ENCODE measurements at regions of chr4 and their contacts with region 1.

Region 1: DNA sequence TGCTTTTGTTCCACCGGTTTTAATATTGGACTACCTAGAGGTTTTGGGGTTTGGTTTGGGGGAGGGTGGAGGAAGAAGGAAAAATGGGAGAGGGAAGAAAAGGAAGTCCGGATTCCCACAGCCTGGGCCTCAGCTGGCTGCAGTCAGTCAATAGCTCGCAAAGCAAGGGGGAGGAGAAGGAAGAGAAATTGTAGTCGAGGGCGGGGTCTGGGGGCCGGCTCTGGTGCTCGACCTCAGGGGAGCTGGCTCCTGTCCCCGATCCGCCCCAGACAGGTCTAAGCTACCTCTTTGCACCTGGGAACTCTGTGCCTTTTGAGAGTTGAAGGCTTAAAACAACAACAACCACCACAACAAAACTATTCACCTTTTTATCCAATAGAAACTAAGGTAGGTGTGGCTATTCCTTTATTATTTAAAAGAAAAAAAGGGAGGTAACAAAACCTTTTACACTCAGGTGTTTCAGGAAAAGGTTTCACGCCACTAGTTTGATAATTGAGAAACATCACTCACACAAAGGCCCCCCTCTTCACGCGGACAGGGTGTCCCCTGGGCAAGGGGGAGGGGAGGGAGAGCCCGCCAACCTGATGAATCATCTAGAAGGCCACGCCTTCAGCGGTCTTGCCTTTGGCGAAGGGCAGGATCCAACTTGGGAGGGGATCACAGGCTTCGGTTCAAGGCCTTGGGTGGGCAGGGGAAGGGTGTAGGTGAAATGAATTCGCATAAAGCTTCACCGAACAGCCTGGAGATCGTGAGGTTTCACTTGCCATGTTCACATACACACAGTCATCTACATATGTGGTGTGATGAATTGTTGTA is 1.6 kb upstream of the LNX1 start:
- DNase-seq: no peak
- ATAC-seq: peak; percentile 80
- H3K4me3 ChIP-seq: peak overlapping the region; percentile 38 to 55
- H3K27ac ChIP-seq: peak overlapping the region; percentile 46
- H3K4me1 ChIP-seq: peaks cover 18 to 30% of the 10 kb centered on the region in 2 experiments
- H3K27me3 ChIP-seq: no peaks in the 10 kb centered on the region
- CTCF ChIP-seq: no peak
- POLR2A ChIP-seq: no peak
- RAD21 ChIP-seq: no peak

Region 2: GRCh38 chr4:53490965-53491622 is 101.8 kb before region 1 on chr4:
- CTCF ChIA-PET with region 1: no interaction called
- POLR2A ChIA-PET with region 1: no interaction called
- RAD21 ChIA-PET with region 1: no interaction called
- intact Hi-C with region 1: loop called (anchors 5 kb)
- DNase-seq: peak; percentile 27
- ATAC-seq: peak; percentile 63; the same call in 1 of the 2 replicates
- H3K4me3 ChIP-seq: no peak overlapping the region
- H3K27ac ChIP-seq: no peak overlapping the region
- H3K4me1 ChIP-seq: peaks cover 0 to 6% of the 10 kb centered on the region in 2 experiments; a peak in 1 of 4 replicates
- H3K27me3 ChIP-seq: peaks cover 2% of the 10 kb centered on the region; the same call in 1 of the 2 replicates
- CTCF ChIP-seq: peak; percentile 26 to 76 (median 71); a peak in 5 of 6 replicates
- POLR2A ChIP-seq: no peak
- RAD21 ChIP-seq: peak; percentile 41

Region 3: GRCh38 chr4:53576676-53577372 is 16.1 kb before region 1 on chr4:
- CTCF ChIA-PET with region 1: no interaction called
- POLR2A ChIA-PET with region 1: no interaction called
- RAD21 ChIA-PET with region 1: no interaction called
- intact Hi-C with region 1: no loop called
- DNase-seq: no peak
- ATAC-seq: no peak
- H3K4me3 ChIP-seq: no peak overlapping the region
- H3K27ac ChIP-seq: no peak overlapping the region
- H3K4me1 ChIP-seq: no peaks in the 10 kb centered on the region
- H3K27me3 ChIP-seq: no peaks in the 10 kb centered on the region
- CTCF ChIP-seq: no peak
- POLR2A ChIP-seq: no peak
- RAD21 ChIP-seq: no peak

Region 4: DNA sequence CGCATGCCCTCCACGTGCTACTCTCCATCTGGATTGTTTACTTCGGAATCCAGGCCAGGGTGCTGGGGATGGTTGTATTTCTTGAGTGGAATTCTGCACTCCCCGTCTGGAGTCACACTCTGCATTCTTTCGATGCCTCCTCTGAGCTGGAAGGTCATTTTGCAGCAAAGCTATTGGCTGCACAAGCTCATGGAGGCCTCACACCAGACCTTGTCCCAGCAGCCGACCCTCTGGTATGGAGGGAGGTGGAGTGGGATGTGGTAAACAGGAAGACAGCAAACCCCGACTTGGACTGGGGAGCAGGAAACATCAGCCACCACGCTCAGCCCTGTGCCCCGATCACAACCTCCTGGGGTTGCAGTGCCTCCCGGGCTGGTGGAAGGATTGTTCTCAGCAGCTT is 223.7 kb after region 1 on chr4:
- CTCF ChIA-PET with region 1: no interaction called
- POLR2A ChIA-PET with region 1: no interaction called
- RAD21 ChIA-PET with region 1: no interaction called
- intact Hi-C with region 1: no loop called
- DNase-seq: no peak
- ATAC-seq: no peak
- H3K4me3 ChIP-seq: no peak overlapping the region
- H3K27ac ChIP-seq: no peak overlapping the region
- H3K4me1 ChIP-seq: no peaks in the 10 kb centered on the region
- H3K27me3 ChIP-seq: no peaks in the 10 kb centered on the region
- CTCF ChIP-seq: no peak
- POLR2A ChIP-seq: no peak
- RAD21 ChIP-seq: no peak